WTC11 (cell line): ENCODE measurements at regions of chr17 and their contacts with region 1.

Region 1: DNA sequence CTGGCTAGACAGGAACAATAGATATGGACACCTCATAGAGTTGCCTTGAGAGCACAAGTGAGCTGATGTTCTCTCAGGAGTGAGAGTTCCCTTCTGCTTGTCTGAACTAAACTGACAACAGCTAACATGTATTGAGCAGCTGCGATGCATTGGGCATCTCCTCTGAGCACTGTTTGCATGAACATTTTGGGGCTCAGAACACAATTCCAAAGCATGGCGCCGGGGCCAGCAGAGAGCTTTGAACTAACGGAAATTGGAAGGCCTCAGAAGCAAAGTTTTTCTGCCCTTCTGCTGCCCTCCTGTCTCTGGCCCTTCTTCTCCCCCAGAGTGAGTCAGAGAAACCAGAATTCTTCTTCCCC is 38.1 kb downstream of the TRPV2 start:
- DNase-seq: no peak
- ATAC-seq: no peak
- H3K4me3 Mint-ChIP-seq: no peak overlapping the region
- H3K27ac Mint-ChIP-seq: peak overlapping the region; percentile 73
- H3K4me1 Mint-ChIP-seq: peaks cover 16% of the 10 kb centered on the region
- H3K27me3 Mint-ChIP-seq: no peaks in the 10 kb centered on the region
- CTCF ChIP-seq: no peak; the same call in 1 of the 2 replicates

Region 2: DNA sequence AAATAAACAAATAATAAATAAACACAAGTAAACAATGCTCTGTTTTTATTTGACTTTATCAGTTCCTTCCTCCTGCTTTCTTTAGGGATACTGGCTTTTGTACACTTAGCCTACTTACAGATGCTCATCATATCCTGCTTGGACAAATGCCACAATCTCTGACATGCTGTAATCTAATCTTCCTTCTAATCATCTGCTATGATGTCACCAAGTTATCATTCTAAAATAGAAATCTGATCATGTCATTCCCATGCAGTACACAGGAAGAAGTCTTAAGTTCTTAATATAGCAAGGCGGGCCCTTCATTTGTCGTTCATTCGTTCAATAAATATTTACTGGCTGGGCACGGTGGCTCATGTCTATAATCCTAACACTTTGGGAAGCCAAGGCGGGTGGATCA is 81.7 kb before region 1 on chr17:
- CTCF ChIA-PET with region 1: no interaction called
- POLR2A ChIA-PET with region 1: no interaction called
- DNase-seq: no peak
- ATAC-seq: no peak
- H3K4me3 Mint-ChIP-seq: no peak overlapping the region
- H3K27ac Mint-ChIP-seq: no peak overlapping the region
- H3K4me1 Mint-ChIP-seq: no peaks in the 10 kb centered on the region
- H3K27me3 Mint-ChIP-seq: no peaks in the 10 kb centered on the region
- CTCF ChIP-seq: no peak

Region 3: GRCh38 chr17:16428098-16428882 is 25.2 kb before region 1 on chr17:
- CTCF ChIA-PET with region 1: interaction called, 16 read pairs
- POLR2A ChIA-PET with region 1: no interaction called
- DNase-seq: peak; percentile 74
- ATAC-seq: peak; percentile 85
- H3K4me3 Mint-ChIP-seq: no peak overlapping the region
- H3K27ac Mint-ChIP-seq: no peak overlapping the region
- H3K4me1 Mint-ChIP-seq: peaks cover 4% of the 10 kb centered on the region
- H3K27me3 Mint-ChIP-seq: peaks cover 7% of the 10 kb centered on the region; the same call in 1 of the 2 replicates
- CTCF ChIP-seq: peak; percentile 27; the same call in 1 of the 2 replicates

Region 4: GRCh38 chr17:16463358-16464302 is 10.2 kb after region 1 on chr17:
- CTCF ChIA-PET with region 1: interaction called, 23 read pairs
- POLR2A ChIA-PET with region 1: interaction called, 4 read pairs
- DNase-seq: no peak
- ATAC-seq: peak; percentile 59
- H3K4me3 Mint-ChIP-seq: no peak overlapping the region
- H3K27ac Mint-ChIP-seq: no peak overlapping the region
- H3K4me1 Mint-ChIP-seq: peaks cover 53% of the 10 kb centered on the region
- H3K27me3 Mint-ChIP-seq: no peaks in the 10 kb centered on the region; the same call in 1 of the 2 replicates
- CTCF ChIP-seq: no peak

Region 5: GRCh38 chr17:16486373-16487250 is 33.1 kb after region 1 on chr17:
- CTCF ChIA-PET with region 1: interaction called, 17 read pairs
- POLR2A ChIA-PET with region 1: no interaction called
- DNase-seq: peak; percentile 50
- ATAC-seq: peak; percentile 14
- H3K4me3 Mint-ChIP-seq: peak overlapping the region; percentile 19; the same call in 1 of the 2 replicates
- H3K27ac Mint-ChIP-seq: peak overlapping the region; percentile 98
- H3K4me1 Mint-ChIP-seq: peaks cover 80% of the 10 kb centered on the region
- H3K27me3 Mint-ChIP-seq: peaks cover 9% of the 10 kb centered on the region; the same call in 1 of the 2 replicates
- CTCF ChIP-seq: no peak

Region 6: DNA sequence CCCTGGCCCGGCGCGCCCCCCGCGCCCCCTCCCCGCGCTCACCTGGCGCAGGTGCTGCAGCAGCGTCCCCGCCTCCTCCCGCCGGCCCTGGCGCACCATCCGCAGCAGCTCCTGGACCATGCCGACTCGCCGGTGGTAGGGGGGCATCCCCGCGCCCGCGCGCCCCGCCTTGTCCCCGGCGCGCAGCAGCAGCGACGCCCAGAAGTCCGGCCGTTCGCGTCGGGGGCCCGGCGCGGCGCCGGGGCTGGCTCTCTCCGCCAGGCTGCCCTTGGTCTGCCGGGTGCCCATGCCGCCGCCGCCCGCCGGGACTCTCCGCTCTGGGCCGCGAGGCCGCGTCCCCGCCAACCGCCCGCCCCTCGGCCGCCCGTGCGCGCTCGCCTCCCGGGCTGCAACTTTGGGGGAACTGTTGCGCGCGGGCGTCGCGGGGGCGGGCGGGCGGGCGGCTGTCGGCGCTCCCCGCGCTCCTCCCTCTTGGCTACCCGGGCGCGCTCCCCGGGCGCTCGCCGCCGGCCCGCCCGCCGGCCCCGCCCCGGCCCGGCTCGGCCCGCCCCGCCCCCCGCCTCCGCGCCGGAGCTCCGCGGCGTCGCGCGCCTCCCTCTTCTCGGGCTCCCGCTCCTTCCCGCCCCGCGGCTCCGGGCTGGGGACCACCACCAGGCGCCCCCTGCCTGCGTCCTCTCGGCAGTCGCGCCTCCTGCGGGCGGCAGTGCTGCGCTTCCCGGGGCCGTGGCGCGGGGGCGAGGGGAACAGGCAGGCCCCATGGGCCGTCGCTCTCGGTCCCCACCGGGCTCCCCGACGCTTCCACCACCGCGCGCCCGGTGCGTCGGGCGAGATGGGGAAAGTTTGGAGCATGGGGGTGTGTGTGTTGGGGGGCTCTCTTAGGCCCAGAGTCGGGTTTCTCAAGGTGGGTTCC is 38.5 kb after region 1 on chr17 and contains the start of gene LRRC75A:
- CTCF ChIA-PET with region 1: interaction called, 17 read pairs
- POLR2A ChIA-PET with region 1: no interaction called
- DNase-seq: peak; percentile 75
- ATAC-seq: peak; percentile 64
- H3K4me3 Mint-ChIP-seq: peak within 1 kb of the TSS; percentile 72
- H3K27ac Mint-ChIP-seq: no peak within 1 kb of the TSS; the same call in 1 of the 2 replicates
- H3K4me1 Mint-ChIP-seq: peaks cover 85% of the 10 kb centered on the region
- H3K27me3 Mint-ChIP-seq: peaks cover 33% of the 10 kb centered on the region
- CTCF ChIP-seq: no peak
- total RNA-seq, gene LRRC75A: 13.7 to 22.9 TPM (median 14.7 TPM) in 3 replicates

Region 7: GRCh38 chr17:16512011-16512410 is 58.5 kb after region 1 on chr17:
- CTCF ChIA-PET with region 1: interaction called, 204 read pairs
- POLR2A ChIA-PET with region 1: no interaction called
- DNase-seq: no peak
- ATAC-seq: peak; percentile 66
- H3K4me3 Mint-ChIP-seq: no peak overlapping the region
- H3K27ac Mint-ChIP-seq: peak overlapping the region; percentile 44
- H3K4me1 Mint-ChIP-seq: peaks cover 29% of the 10 kb centered on the region
- H3K27me3 Mint-ChIP-seq: peaks cover 19% of the 10 kb centered on the region
- CTCF ChIP-seq: no peak

Region 8: GRCh38 chr17:16537130-16537458 is 83.6 kb after region 1 on chr17:
- CTCF ChIA-PET with region 1: interaction called, 17 read pairs
- POLR2A ChIA-PET with region 1: no interaction called
- DNase-seq: no peak
- ATAC-seq: no peak
- H3K4me3 Mint-ChIP-seq: peak overlapping the region; percentile 98; the same call in 1 of the 2 replicates
- H3K27ac Mint-ChIP-seq: no peak overlapping the region
- H3K4me1 Mint-ChIP-seq: peaks cover 9% of the 10 kb centered on the region; the same call in 1 of the 2 replicates
- H3K27me3 Mint-ChIP-seq: no peaks in the 10 kb centered on the region
- CTCF ChIP-seq: no peak